ENCODE measurements at regions of chr11 and their contacts with region 1.

Region 1: GRCh38 chr11:518463-519250 is 11.6 kb upstream of the RNH1 start:
- DNase-seq: peak; percentile 90
- ATAC-seq: peak; percentile 93
- H3K4me3 Mint-ChIP-seq: peak overlapping the region; percentile 65
- H3K27ac Mint-ChIP-seq: peak overlapping the region; percentile 69
- H3K4me1 Mint-ChIP-seq: peaks cover 10% of the 10 kb centered on the region
- H3K27me3 Mint-ChIP-seq: no peaks in the 10 kb centered on the region

Region 2: GRCh38 chr11:506238-506994 is 12.2 kb before region 1 on chr11:
- CTCF ChIA-PET with region 1: interaction called, 24 read pairs
- POLR2A ChIA-PET with region 1: interaction called, 3 read pairs
- DNase-seq: peak; percentile 98
- ATAC-seq: peak; percentile 81
- H3K4me3 Mint-ChIP-seq: peak overlapping the region; percentile 96
- H3K27ac Mint-ChIP-seq: peak overlapping the region; percentile 99
- H3K4me1 Mint-ChIP-seq: peaks cover 29% of the 10 kb centered on the region
- H3K27me3 Mint-ChIP-seq: no peaks in the 10 kb centered on the region

Region 3: DNA sequence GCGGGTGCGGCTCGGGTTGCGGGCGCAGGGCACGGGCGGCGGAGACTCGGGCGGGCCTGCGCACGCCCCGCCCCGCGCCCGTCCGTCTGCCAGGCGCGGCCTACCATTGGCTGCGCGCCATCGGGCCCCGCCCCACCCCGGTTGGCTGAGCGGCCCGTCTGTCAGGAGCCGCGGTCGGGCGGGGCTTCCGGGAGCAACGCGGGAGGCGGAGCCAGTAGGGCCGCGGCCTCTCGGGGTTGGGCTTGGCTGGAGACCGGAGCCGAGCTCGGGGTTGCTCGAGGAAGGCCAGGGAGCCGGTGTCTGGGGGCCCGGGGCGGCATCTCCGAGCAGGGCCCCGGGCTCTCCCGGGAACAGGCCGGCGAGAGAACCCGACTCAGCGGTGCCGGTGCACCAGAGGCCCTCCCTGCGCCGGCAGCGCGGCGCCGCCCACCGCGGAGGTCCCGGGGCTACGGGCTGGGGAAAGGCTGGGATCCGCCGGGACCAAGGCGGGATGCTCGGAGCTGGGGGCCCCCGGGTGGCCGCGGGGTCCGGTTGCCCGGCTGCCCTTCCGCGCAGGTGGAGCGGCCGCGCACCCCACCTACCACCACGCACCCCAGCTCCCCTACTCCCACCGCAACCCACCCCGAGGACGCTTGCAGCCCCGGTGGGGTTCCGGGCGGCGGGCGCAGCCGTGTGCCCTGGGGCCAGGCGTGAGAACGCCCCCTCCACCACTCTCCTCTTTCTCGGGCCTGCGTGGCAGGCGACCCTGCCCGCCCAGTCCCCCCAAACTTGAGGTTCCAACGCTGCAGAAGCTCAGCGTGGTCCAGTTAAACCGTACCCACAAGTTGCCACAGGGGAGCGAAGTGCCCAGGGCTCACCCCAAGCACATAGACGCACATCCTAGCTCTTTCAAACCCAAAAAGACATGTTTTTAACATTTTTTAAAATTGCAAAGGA is 17.1 kb after region 1 on chr11 and contains the start of gene HRAS:
- CTCF ChIA-PET with region 1: interaction called, 11 read pairs
- POLR2A ChIA-PET with region 1: no interaction called
- DNase-seq: peak; percentile 96
- ATAC-seq: peak; percentile 88
- H3K4me3 Mint-ChIP-seq: peak within 1 kb of the TSS; percentile 88
- H3K27ac Mint-ChIP-seq: peak within 1 kb of the TSS; percentile 93
- H3K4me1 Mint-ChIP-seq: peaks cover 26% of the 10 kb centered on the region
- H3K27me3 Mint-ChIP-seq: no peaks in the 10 kb centered on the region
- total RNA-seq, gene HRAS: 58.7 to 68.9 TPM

Measured in activated CD8-positive, alpha-beta T cell treated with anti-CD3 and anti-CD28 coated beads, Interleukin-2, amount 10 ng/mL, durations not matched to agents 7 days and 5 days (primary cell).